WTC11 (cell line): ENCODE measurements at regions of chr9 and their contacts with region 1.

Region 1: GRCh38 chr9:130866474-130866965 is 30.1 kb downstream of the QRFP start:
- DNase-seq: peak; percentile 91
- ATAC-seq: peak; percentile 95
- H3K4me3 Mint-ChIP-seq: no peak overlapping the region
- H3K27ac Mint-ChIP-seq: peak overlapping the region; percentile 77; the same call in 1 of the 2 replicates
- H3K4me1 Mint-ChIP-seq: peaks cover 5% of the 10 kb centered on the region
- H3K27me3 Mint-ChIP-seq: no peaks in the 10 kb centered on the region
- CTCF ChIP-seq: peak; percentile 85

Region 2: DNA sequence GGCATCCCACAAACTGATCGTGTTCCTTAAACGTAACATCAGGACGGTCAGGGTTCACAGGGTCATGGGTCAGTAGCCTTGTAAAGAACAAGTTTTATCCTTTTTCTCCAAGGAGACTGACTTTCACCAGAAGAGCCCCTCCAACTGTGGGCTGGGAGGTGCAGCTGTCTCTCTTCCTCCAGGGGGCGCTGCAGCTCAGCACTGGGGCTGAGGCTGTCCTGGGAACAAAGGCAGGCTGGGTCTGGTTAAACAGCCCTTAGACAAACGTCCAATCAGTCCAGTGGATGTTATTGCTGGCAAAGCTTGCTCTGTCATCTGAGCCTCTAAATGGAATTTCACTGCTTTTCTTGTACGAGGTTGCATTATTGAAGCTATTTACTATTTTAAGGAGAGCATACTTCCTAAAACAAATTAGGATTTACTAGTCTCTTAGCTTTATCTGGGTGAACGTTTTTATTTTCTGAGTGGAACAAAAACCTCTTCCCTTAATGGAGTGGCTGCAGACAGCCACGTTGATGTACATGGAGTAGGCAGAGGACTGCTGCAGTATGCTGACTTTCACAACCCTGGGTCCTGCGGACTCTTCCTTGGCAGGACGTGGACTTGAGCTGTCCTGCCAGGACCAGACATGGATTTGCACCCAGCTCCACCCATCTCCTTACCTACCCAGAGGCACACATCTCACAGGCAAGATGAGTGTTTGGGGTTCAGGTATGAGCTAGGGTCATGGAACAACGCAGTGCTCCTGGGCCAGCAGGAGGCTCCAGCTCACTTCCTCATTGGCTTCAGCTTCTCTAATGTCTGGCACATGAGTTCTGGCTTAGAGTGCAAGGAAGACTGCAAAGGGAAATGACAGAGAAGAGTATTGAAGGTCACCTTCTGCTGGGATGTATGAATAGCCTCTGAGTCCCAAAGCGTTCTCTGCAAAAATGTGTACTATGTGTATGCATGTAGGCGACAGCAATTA is 165.2 kb before region 1 on chr9:
- CTCF ChIA-PET with region 1: interaction called, 83 read pairs
- POLR2A ChIA-PET with region 1: no interaction called
- DNase-seq: peak; percentile 89
- ATAC-seq: peak; percentile 97
- H3K4me3 Mint-ChIP-seq: no peak overlapping the region
- H3K27ac Mint-ChIP-seq: peak overlapping the region; percentile 76
- H3K4me1 Mint-ChIP-seq: peaks cover 14% of the 10 kb centered on the region
- H3K27me3 Mint-ChIP-seq: no peaks in the 10 kb centered on the region
- CTCF ChIP-seq: peak; percentile 98

Region 3: DNA sequence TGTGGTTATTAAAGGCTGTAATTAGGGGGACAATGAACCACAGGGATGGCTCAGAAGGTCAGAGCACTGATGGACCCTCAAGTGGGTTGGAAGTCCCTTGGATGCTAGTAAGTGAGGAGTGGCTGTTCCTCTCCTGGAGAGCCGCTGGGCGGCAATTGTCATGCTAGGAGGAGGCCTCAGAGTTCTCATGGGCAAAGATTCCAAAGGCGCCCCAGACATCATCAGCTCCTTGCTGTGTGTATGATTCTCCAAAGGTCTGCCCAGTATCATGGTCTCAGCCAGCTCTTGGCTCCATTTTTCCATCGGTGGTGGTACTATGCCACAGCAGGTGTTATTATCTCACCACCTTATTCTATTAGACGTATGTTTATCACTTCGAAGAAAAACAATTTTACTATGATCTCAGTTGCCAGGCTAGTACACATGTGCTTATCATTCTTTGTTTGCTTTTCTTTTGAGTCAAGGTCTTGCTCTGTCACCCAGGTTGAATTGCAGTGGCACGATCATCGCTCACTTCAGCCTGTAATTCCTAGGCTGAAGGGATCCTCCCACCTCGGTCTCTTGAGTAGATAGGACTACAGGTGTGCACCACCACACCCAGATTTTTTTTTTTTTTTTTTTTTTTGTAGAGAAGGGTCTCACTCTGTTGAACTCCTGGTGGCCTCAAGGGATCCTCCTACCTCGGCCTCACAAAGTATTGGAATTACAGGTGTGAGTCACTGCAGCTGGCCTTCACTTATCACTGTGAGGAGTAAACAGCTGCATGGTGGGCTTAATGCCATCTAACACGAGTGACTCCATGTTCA is 126.1 kb before region 1 on chr9:
- CTCF ChIA-PET with region 1: interaction called, 11 read pairs
- POLR2A ChIA-PET with region 1: no interaction called
- DNase-seq: no peak
- ATAC-seq: no peak
- H3K4me3 Mint-ChIP-seq: no peak overlapping the region
- H3K27ac Mint-ChIP-seq: no peak overlapping the region
- H3K4me1 Mint-ChIP-seq: peaks cover 19% of the 10 kb centered on the region
- H3K27me3 Mint-ChIP-seq: no peaks in the 10 kb centered on the region
- CTCF ChIP-seq: no peak

Region 4: GRCh38 chr9:130785940-130786508 is 80.5 kb before region 1 on chr9:
- CTCF ChIA-PET with region 1: interaction called, 11 read pairs
- POLR2A ChIA-PET with region 1: no interaction called
- DNase-seq: no peak
- ATAC-seq: no peak
- H3K4me3 Mint-ChIP-seq: no peak overlapping the region
- H3K27ac Mint-ChIP-seq: no peak overlapping the region
- H3K4me1 Mint-ChIP-seq: peaks cover 22% of the 10 kb centered on the region
- H3K27me3 Mint-ChIP-seq: no peaks in the 10 kb centered on the region
- CTCF ChIP-seq: no peak

Region 5: GRCh38 chr9:130884980-130885696 is 18.6 kb after region 1 on chr9:
- CTCF ChIA-PET with region 1: interaction called, 24 read pairs
- POLR2A ChIA-PET with region 1: interaction called, 3 read pairs
- DNase-seq: no peak
- ATAC-seq: no peak
- H3K4me3 Mint-ChIP-seq: no peak overlapping the region
- H3K27ac Mint-ChIP-seq: peak overlapping the region; percentile 59
- H3K4me1 Mint-ChIP-seq: peaks cover 10% of the 10 kb centered on the region
- H3K27me3 Mint-ChIP-seq: no peaks in the 10 kb centered on the region
- CTCF ChIP-seq: no peak

Region 6: GRCh38 chr9:130940693-130941576 is 74.4 kb after region 1 on chr9:
- CTCF ChIA-PET with region 1: interaction called, 13 read pairs
- POLR2A ChIA-PET with region 1: no interaction called
- DNase-seq: peak; percentile 98
- ATAC-seq: peak; percentile 76
- H3K4me3 Mint-ChIP-seq: peak overlapping the region; percentile 61
- H3K27ac Mint-ChIP-seq: no peak overlapping the region; the same call in 1 of the 2 replicates
- H3K4me1 Mint-ChIP-seq: peaks cover 26% of the 10 kb centered on the region
- H3K27me3 Mint-ChIP-seq: peaks cover 50% of the 10 kb centered on the region
- CTCF ChIP-seq: peak; percentile 71

Region 7: GRCh38 chr9:131046581-131047202 is 180.2 kb after region 1 on chr9:
- CTCF ChIA-PET with region 1: interaction called, 16 read pairs
- POLR2A ChIA-PET with region 1: no interaction called
- DNase-seq: peak; percentile 83
- ATAC-seq: peak; percentile 95
- H3K4me3 Mint-ChIP-seq: no peak overlapping the region
- H3K27ac Mint-ChIP-seq: no peak overlapping the region
- H3K4me1 Mint-ChIP-seq: no peaks in the 10 kb centered on the region
- H3K27me3 Mint-ChIP-seq: no peaks in the 10 kb centered on the region
- CTCF ChIP-seq: peak; percentile 85